HEK293T (cell line): ENCODE measurements at regions of chr6 and their contacts with region 1.

Region 1: DNA sequence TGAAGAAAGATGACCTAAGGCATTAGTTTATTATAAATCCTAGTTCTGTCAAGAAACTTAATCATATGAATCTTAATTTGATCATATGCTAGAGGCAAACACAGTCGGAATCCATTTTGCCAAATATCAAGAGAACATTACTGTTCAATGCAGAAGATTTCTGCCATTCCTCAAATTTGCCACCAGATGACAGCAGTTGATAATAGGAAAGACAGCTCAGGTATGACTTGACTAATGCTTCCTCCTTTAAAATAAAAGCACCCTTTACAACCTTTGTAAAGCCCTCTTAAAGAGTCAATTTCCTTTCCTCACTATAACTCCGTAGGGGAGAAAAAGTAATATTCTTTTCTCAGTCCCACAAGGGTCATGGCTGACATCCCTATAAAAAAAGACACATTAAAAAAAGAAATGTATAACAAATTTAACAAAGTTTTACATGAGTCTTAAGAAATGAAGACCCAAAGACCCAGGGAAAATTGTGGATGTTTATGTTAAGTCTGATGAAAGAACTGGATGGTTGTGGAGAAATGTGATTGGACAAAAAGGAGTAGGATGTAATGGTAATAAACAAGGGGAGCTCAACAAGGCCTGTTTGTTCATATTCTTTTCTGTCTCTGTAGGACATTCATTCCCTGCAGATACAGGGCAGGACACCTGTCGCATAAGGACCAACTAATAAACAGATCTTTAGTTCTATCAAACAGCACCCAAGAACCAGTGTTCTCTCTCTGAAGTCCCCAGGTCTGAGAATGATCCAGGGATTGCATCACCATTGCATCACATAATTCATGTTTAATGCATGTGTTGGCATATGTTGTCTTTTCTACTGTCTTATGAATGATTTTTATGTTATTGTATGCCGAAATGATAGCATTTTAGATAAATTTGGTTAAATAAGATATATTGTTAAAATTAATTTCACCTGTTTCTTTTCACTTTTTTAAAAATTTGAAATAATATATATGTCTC is 23.0 kb upstream of the IL17A start:
- DNase-seq: peak; percentile 26

Region 2: DNA sequence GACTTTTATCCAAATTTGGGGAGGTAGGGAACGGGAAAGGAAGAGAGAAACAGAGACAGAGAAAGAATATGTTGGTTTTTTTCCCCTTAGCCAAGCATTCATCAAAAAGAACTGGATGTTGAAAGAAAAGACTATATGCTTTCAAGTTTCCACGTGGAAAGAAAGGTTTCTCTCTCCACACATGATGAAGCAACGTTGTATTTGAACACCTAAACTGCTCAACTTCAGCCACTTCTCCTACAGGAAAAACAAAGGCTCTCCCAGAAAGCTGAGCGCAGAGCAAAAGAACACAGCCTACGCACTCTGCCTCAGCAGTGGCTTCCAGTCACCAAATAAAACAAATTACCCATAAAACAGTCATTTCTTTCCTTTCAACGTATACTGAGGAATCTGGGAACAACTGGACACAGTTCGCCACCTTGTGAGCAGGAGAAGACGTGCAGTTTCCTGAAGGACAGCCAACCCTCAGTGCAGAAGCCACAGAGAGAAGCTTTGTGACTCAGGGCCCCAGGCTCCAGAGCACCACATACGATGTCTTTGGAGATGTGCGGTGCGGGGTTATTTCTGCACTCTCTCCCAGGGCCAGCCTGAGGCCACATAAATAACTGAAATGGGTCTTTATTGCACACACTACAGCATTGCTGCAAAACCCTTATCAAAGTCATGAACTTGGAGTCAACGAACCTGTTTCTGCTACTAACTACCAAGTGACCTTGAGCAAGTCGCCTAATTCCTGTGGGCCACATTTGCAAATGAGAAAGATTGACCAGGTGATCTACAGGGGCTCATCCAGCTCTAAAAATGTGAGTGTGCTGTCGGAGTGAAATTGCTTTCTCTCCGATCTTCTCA is 71.0 kb after region 1 on chr6:
- CTCF ChIA-PET with region 1: interaction called, 25 read pairs
- POLR2A ChIA-PET with region 1: interaction called, 3 read pairs
- DNase-seq: peak; percentile 83